AG04449 (cell line): ENCODE measurements at regions of chr11 and their contacts with region 1.

Region 1: DNA sequence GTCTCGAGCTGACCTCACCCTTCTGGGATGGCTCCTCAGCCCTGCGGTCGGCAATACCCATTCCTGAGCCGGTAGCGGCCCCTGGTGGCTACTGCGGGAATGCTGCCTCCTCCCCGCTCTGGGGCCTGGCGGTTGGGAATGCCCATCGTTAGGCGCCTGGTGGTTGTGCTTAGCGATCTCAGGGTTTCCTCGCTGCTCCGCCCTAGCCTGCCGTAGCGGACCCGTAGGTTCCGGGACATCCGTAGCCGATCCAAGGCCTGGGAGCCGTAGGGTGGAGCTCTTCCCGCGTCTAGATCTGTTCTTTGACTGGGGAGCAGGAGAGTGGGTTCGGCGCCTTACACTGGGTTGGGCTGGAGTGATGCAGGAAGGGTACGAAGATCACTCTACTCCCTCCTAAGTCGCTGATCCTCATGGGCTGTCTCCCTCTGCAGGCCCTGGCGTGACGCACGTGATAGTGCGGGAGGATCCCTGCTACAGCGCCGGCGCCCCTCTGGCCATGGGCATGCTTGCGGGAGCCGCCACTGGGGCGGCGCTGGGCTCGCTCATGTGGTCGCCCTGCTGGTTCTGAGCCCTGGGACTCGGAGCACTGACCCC is 14.8 kb downstream of the PLEKHB1 start:
- DNase-seq: peak; percentile 16
- H3K4me3 ChIP-seq: peak overlapping the region; percentile 54
- CTCF ChIP-seq: peak; percentile 98

Region 2: DNA sequence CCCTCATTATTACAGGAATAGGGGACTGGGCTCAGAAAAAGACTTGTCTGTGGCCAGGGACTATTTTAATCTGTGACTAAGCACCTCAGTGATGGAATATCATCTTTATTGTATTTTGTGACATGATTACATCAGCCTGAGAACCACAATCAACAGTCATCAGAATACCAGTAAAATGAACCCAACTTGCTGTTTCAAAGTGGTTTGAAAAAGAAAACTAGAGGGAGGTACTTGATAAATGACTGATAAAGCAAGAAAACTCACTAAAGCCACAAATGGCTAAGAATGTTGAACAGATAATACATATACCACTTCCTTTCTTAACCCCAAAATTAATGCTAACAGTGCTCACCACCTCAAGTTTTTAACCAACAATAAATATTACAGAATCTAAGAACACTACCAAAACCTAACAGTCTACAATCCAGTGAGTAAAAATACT is 691.2 kb before region 1 on chr11:
- CTCF ChIA-PET with region 1: no interaction called
- POLR2A ChIA-PET with region 1: no interaction called
- DNase-seq: peak; percentile 56
- H3K4me3 ChIP-seq: no peak overlapping the region
- CTCF ChIP-seq: no peak

Region 3: GRCh38 chr11:73307323-73308002 is 353.7 kb before region 1 on chr11:
- CTCF ChIA-PET with region 1: interaction called, 50 read pairs
- POLR2A ChIA-PET with region 1: interaction called, 3 read pairs
- DNase-seq: peak; percentile 89
- H3K4me3 ChIP-seq: peak overlapping the region; percentile 81
- CTCF ChIP-seq: peak; percentile 82

Region 4: GRCh38 chr11:73376160-73376802 is 284.9 kb before region 1 on chr11 and contains the start of gene RELT:
- CTCF ChIA-PET with region 1: interaction called, 49 read pairs
- POLR2A ChIA-PET with region 1: interaction called, 4 read pairs
- DNase-seq: no peak
- H3K4me3 ChIP-seq: peak within 1 kb of the TSS; percentile 79
- CTCF ChIP-seq: peak; percentile 89

Region 5: DNA sequence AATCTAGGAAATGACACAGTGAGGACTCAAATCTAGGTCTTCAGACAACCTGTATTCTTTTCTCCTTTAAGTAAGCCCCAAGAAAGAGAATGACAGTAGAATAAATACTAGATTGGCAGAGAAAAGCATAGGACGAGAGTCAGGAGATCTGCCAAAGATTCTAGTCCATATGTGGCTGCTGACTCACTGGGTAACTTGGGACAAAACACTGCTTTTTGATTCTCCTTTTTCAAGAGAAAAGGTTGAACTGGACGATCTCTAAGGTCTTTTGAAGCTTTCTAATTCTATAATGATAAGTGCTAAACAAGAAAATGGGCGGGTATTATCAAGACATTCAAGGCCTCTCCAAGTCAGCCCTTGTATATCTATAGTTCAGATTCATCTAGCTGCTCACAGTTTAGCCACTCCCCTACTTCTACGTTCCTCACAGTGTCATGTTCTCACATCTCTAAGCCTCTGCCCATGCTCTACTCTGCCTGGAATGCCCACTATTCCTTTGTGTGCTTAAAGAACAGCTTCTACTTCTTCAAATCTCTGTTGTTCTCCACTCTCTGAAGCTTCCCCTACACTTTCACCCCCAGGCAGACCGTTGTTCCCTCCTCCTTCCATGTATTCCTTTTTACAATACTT is 231.9 kb before region 1 on chr11:
- CTCF ChIA-PET with region 1: interaction called, 21 read pairs
- POLR2A ChIA-PET with region 1: no interaction called
- DNase-seq: no peak
- H3K4me3 ChIP-seq: no peak overlapping the region
- CTCF ChIP-seq: no peak

Region 6: GRCh38 chr11:73625696-73626318 is 35.3 kb before region 1 on chr11:
- CTCF ChIA-PET with region 1: interaction called, 186 read pairs
- POLR2A ChIA-PET with region 1: no interaction called
- DNase-seq: no peak
- H3K4me3 ChIP-seq: peak overlapping the region; percentile 36
- CTCF ChIP-seq: peak; percentile 92

Region 7: GRCh38 chr11:73680687-73681086 is 19.6 kb after region 1 on chr11:
- CTCF ChIA-PET with region 1: interaction called, 30 read pairs
- POLR2A ChIA-PET with region 1: no interaction called
- DNase-seq: no peak
- H3K4me3 ChIP-seq: no peak overlapping the region
- CTCF ChIP-seq: no peak